ENCODE measurements at regions of chr5 and their contacts with region 1.

Region 1: GRCh38 chr5:176660860-176661641 is 13.8 kb downstream of the TSPAN17 start:
- DNase-seq: peak; percentile 81
- H3K4me3 Mint-ChIP-seq: no peak overlapping the region
- H3K27ac Mint-ChIP-seq: no peak overlapping the region
- H3K4me1 Mint-ChIP-seq: no peaks in the 10 kb centered on the region
- H3K27me3 Mint-ChIP-seq: peaks cover 17% of the 10 kb centered on the region
- CTCF ChIP-seq: peak; percentile 99

Region 2: GRCh38 chr5:174667521-174667920 is 1993.5 kb before region 1 on chr5:
- CTCF ChIA-PET with region 1: no interaction called
- POLR2A ChIA-PET with region 1: no interaction called
- intact Hi-C with region 1: no loop called
- DNase-seq: no peak
- H3K4me3 Mint-ChIP-seq: no peak overlapping the region
- H3K27ac Mint-ChIP-seq: no peak overlapping the region
- H3K4me1 Mint-ChIP-seq: no peaks in the 10 kb centered on the region
- H3K27me3 Mint-ChIP-seq: no peaks in the 10 kb centered on the region
- CTCF ChIP-seq: no peak

Region 3: GRCh38 chr5:176636426-176636825 is 24.6 kb before region 1 on chr5:
- CTCF ChIA-PET with region 1: interaction called, 11 read pairs
- POLR2A ChIA-PET with region 1: no interaction called
- intact Hi-C with region 1: no loop called
- DNase-seq: no peak
- H3K4me3 Mint-ChIP-seq: no peak overlapping the region
- H3K27ac Mint-ChIP-seq: no peak overlapping the region
- H3K4me1 Mint-ChIP-seq: peaks cover 11% of the 10 kb centered on the region
- H3K27me3 Mint-ChIP-seq: peaks cover 32% of the 10 kb centered on the region
- CTCF ChIP-seq: no peak

Region 4: DNA sequence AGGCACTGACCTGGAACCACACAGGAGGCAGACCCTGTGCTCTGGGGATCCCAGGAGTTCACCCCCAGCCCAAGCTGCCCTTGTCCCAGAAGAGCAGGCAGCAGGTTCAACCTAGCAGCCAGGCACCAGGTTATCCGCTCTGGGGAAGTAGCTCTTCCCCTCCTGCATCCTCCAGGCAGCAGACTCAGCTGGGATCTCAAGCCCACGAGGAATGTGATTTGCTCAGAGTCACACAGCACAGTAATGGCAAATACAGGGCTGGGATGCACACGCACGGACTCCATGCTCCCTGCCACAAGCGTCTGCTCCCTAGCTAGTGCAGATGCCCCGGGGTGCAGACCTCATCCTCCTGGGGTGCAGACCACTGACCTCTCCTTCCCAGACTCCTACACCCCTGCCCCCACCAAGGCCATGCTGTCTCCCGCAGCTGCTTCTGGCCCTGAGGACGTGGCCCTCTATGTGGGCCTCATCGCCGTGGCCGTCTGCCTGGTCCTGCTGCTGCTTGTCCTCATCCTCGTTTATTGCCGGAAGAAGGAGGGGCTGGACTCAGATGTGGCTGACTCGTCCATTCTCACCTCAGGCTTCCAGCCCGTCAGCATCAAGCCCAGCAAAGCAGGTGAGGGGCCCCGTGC is 212.6 kb after region 1 on chr5:
- CTCF ChIA-PET with region 1: interaction called, 10 read pairs
- POLR2A ChIA-PET with region 1: interaction called, 3 read pairs
- intact Hi-C with region 1: no loop called
- DNase-seq: no peak
- H3K4me3 Mint-ChIP-seq: no peak overlapping the region
- H3K27ac Mint-ChIP-seq: no peak overlapping the region
- H3K4me1 Mint-ChIP-seq: no peaks in the 10 kb centered on the region
- H3K27me3 Mint-ChIP-seq: peaks cover 52% of the 10 kb centered on the region
- CTCF ChIP-seq: no peak

Region 5: GRCh38 chr5:176921714-176922113 is 260.7 kb after region 1 on chr5:
- CTCF ChIA-PET with region 1: interaction called, 26 read pairs
- POLR2A ChIA-PET with region 1: no interaction called
- intact Hi-C with region 1: no loop called
- DNase-seq: no peak
- H3K4me3 Mint-ChIP-seq: no peak overlapping the region
- H3K27ac Mint-ChIP-seq: no peak overlapping the region
- H3K4me1 Mint-ChIP-seq: peaks cover 5% of the 10 kb centered on the region
- H3K27me3 Mint-ChIP-seq: no peaks in the 10 kb centered on the region
- CTCF ChIP-seq: no peak

Region 6: DNA sequence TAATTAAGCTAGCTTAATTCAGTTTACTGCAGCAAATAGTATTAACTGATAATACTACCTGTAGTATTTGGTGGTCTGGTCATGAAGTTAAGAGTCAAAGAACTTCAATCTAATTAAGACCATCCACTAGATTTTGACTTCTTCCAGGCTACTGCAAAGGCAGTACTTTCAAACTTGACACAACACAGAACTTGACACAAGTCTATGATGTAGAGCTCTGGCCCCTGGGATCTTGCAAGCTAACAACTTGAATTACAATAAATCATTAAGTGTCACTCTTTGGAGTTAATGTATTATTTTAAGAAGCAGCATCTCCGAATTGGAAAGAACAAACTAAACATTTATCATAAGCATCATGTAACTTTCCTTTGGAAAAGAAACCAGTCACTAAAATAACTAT is 304.6 kb after region 1 on chr5:
- CTCF ChIA-PET with region 1: interaction called, 86 read pairs
- POLR2A ChIA-PET with region 1: no interaction called
- intact Hi-C with region 1: no loop called
- DNase-seq: no peak
- H3K4me3 Mint-ChIP-seq: no peak overlapping the region
- H3K27ac Mint-ChIP-seq: no peak overlapping the region
- H3K4me1 Mint-ChIP-seq: no peaks in the 10 kb centered on the region
- H3K27me3 Mint-ChIP-seq: no peaks in the 10 kb centered on the region
- CTCF ChIP-seq: no peak